Activated naive CD4-positive, alpha-beta T cell treated with anti-CD3 and anti-CD28 coated beads for 36 hours (primary cell): ENCODE measurements at regions of chr2 and their contacts with region 1.

Region 1: DNA sequence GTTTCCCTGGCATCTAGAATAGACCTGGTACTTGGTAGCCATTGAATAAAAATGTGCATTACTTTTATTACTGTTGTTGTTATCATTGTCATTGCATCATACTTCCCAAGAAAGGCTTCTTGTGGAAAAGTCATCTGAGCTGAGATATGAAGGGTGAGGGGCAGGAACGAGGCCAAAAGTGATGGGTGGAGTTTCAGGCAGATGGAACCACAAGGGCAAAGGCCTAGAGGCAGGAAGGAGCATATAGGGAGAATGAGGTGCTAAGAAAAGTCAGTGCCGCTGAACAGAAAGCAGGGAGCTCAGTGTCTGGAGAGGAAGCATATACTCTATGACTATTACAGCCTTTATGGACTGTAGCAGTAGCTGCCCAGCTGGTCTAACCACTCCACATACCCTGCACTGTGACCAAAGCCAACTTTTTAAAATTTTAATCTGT is 219.3 kb downstream of the SPP2 start:
- DNase-seq: no peak
- H3K4me3 Mint-ChIP-seq: no peak overlapping the region
- H3K27ac Mint-ChIP-seq: no peak overlapping the region
- H3K4me1 Mint-ChIP-seq: peaks cover 47% of the 10 kb centered on the region
- H3K27me3 Mint-ChIP-seq: no peaks in the 10 kb centered on the region

Region 2: GRCh38 chr2:234257856-234258561 is 11.8 kb before region 1 on chr2:
- CTCF ChIA-PET with region 1: interaction called, 3 read pairs
- intact Hi-C with region 1: loop called (anchors 2 kb)
- DNase-seq: peak; percentile 60
- H3K4me3 Mint-ChIP-seq: no peak overlapping the region
- H3K27ac Mint-ChIP-seq: no peak overlapping the region
- H3K4me1 Mint-ChIP-seq: peaks cover 11% of the 10 kb centered on the region
- H3K27me3 Mint-ChIP-seq: no peaks in the 10 kb centered on the region